ENCODE measurements at regions of chr6 and their contacts with region 1.

Region 1: GRCh38 chr6:39361657-39362486 is 39.4 kb upstream of the KCNK16 start:
- DNase-seq: peak; percentile 61
- ATAC-seq: peak; percentile 77
- H3K4me3 Mint-ChIP-seq: no peak overlapping the region
- H3K27ac Mint-ChIP-seq: no peak overlapping the region
- H3K4me1 Mint-ChIP-seq: peaks cover 3% of the 10 kb centered on the region
- H3K27me3 Mint-ChIP-seq: peaks cover 2% of the 10 kb centered on the region
- CTCF ChIP-seq: peak; percentile 85

Region 2: DNA sequence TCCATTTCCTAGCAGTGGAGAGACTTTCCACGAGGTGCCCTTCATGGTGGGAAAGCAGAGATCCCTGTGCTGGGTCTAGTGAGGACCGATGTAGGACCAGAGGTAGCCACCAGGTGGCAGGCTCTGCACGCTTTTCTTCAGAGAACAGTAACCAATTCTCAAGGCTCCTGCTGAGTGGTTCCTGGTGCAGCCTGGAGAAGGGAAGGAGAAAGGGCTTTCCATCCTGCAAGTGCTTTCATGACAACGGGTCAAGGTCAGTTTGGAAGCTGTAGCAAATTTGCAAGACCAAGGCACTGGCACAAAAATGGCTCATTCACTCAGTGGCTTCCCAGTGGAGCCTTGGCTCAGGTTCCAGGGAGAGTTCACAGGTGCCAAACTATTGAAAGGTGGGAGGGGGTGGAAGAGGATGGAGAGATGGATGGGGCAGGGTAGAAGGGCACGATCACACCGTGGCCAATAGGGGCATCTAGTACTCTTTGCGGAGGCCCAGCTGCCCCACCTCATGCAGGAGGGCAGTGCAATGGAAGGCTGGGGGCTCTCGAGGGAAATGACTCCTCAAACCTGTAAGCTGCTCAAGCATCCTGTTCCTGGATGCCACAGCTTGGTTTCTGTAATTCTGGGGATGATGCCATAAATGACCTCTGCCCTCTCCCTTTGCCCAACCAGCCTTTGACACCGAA is 13.8 kb before region 1 on chr6:
- CTCF ChIA-PET with region 1: interaction called, 10 read pairs
- POLR2A ChIA-PET with region 1: no interaction called
- intact Hi-C with region 1: no loop called
- DNase-seq: peak; percentile 77
- ATAC-seq: peak; percentile 78
- H3K4me3 Mint-ChIP-seq: no peak overlapping the region
- H3K27ac Mint-ChIP-seq: no peak overlapping the region
- H3K4me1 Mint-ChIP-seq: no peaks in the 10 kb centered on the region
- H3K27me3 Mint-ChIP-seq: no peaks in the 10 kb centered on the region
- CTCF ChIP-seq: peak; percentile 94